H1 (cell line): ENCODE measurements at regions of chr1 and their contacts with region 1.

Region 1: DNA sequence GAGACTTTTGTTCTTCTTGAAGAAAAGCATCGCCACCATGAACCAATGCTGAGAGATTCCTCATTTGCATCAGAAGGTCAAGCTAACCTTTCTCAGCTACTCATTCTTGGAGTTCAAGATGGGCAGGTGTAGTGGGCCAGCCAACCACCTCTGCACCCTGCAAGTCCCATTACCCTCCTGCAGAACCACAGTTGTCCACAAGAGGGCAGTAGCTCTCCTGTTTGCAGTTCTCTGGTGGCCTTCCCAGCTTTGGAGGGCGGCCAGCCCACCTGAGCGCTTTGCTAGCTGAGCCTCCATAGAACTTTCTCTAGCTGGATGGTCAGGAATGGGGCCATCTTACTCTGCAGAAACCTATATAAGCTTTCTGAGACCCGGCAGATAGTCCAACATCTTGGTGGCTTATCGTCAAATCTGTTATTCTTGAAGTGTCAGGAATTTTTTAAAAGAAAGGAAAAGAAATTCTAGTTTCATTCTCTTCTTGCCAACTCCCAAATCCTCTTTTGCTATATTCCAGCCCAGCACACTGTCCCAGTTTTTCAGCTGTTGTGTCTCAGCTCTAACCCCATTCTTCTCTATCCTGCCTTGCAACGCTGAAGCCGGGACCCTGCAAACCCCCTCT is 11.0 kb upstream of the LMX1A start:
- DNase-seq: peak in 1 of 2 experiments; percentile 98
- H3K4me3 ChIP-seq: no peak overlapping the region
- H3K27ac ChIP-seq: no peak overlapping the region
- H3K4me1 ChIP-seq: peaks cover 0 to 4% (median 0%) of the 10 kb centered on the region in 4 experiments; a peak in 3 of 7 replicates
- H3K27me3 ChIP-seq: peaks cover 0 to 5% (median 0%) of the 10 kb centered on the region in 4 experiments; a peak in 1 of 7 replicates
- CTCF ChIP-seq: peak; percentile 90 to 99 (median 91)
- EP300 ChIP-seq: no peak
- POLR2A ChIP-seq: no peak
- RAD21 ChIP-seq: peak; percentile 64 to 76

Region 2: DNA sequence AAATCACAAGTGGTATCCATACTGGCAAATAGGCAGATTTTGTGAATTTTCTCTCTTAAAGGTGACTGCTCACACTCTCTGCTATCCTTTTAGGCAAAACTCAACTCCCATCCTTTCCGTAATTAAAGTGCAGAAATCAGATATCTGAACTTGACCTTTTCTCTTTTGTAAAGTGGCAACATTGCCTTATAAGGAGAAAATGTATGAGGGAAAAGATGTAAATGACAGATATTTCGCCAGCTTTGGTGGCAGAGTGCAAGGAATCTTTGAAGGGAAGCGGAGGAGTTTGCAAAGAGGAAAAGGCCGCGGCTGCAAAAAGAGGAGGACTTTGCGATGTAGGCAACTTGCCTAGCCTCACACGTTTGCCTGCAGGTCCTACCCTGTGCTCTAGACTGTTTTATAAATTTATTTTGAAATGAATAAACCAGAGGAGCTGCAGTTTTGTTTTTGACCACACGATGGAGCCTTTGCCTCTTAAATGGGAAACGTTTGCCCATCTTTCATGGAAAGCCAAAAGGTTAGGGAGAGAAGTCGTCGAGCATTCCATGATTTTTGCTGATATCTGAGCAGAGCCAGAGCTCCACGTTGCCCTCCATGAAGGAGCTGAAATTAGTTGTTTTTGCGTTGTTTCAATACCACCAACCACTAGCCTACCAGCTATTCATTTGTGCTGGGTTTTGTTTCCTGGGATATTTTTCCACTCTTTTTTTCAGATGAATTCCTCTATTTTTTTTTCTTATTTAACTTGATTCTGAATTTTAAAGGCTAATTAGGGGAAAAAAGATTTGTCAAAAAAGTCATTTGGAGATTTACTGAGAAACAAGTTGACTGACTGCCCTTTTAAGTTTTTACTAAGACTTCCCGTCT is 253.2 kb before region 1 on chr1:
- CTCF ChIA-PET with region 1: interaction called, 13 read pairs
- POLR2A ChIA-PET with region 1: no interaction called
- DNase-seq: peak; percentile 47 to 84
- H3K4me3 ChIP-seq: no peak overlapping the region
- H3K27ac ChIP-seq: no peak overlapping the region
- H3K4me1 ChIP-seq: peaks cover 0 to 7% (median 3%) of the 10 kb centered on the region in 4 experiments; a peak in 4 of 7 replicates
- H3K27me3 ChIP-seq: peaks cover 20 to 42% (median 29%) of the 10 kb centered on the region in 4 experiments
- CTCF ChIP-seq: peak in 2 of 3 experiments; percentile 72; a peak in 3 of 4 replicates
- EP300 ChIP-seq: no peak
- POLR2A ChIP-seq: no peak
- RAD21 ChIP-seq: peak; percentile 81 to 88

Region 3: DNA sequence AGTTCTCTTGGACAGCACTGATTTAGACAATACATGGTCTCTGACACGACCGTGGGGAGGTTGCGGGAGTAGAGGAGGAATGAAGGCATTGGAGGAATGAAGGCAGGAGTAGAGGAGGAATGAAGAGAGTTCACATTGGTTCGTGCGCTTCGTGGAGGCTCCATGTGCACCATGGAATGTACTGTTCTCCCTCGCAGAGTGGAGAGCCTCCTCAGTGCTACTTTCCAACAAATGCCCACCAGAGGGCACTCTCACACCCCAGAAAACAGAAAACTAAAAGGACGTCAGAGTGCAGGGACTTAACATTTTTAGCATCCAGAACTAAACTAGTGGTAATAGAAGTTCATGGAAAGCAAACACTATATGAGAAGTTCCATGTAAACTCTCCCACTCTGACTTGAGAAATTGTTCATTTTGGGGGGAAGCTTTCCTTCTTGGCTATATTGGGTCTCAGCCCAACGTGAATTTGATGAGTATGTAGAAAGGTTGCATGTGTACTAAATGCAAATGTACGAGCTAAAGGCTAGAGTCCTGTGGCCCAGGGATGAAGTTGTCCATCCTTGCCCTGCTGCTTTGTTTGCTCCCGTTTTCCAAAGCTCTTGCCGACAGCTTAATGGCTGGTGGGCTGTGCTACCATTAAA is 222.6 kb before region 1 on chr1:
- CTCF ChIA-PET with region 1: interaction called, 70 read pairs
- POLR2A ChIA-PET with region 1: no interaction called
- DNase-seq: peak; percentile 36 to 80
- H3K4me3 ChIP-seq: no peak overlapping the region
- H3K27ac ChIP-seq: no peak overlapping the region
- H3K4me1 ChIP-seq: no peaks in the 10 kb centered on the region
- H3K27me3 ChIP-seq: peaks cover 0 to 2% (median 1%) of the 10 kb centered on the region in 4 experiments; a peak in 3 of 7 replicates
- CTCF ChIP-seq: peak; percentile 51 to 84 (median 83)
- EP300 ChIP-seq: no peak
- POLR2A ChIP-seq: no peak
- RAD21 ChIP-seq: peak; percentile 81 to 89

Region 4: DNA sequence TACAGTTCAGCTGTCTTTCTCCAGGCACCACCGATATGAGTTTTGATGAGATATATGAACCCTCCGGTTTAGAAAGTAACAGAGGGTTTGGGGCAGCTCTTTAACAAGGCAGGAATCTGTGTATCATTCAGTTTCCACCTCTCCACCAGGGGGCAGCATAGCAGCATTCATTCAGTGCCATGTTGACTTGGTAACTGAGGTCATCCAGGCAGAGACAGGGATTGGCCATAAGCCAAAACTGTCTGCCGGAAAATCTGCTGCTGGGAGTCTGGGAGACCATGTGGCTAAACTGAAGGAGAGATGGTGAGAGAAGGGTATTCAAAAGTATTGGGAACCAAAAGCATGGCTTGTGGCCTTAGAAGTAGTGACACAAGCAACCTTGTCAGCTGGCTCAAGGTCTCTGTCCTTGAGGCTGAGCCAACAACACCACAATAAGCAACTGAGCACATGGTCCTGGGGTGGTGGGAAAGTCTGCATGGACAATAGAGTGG is 109.5 kb before region 1 on chr1:
- CTCF ChIA-PET with region 1: interaction called, 138 read pairs
- POLR2A ChIA-PET with region 1: no interaction called
- DNase-seq: peak; percentile 61 to 90
- H3K4me3 ChIP-seq: no peak overlapping the region
- H3K27ac ChIP-seq: no peak overlapping the region
- H3K4me1 ChIP-seq: peaks cover 0 to 3% (median 1%) of the 10 kb centered on the region in 4 experiments; a peak in 2 of 7 replicates
- H3K27me3 ChIP-seq: peaks cover 0 to 3% (median 1%) of the 10 kb centered on the region in 4 experiments; a peak in 4 of 7 replicates
- CTCF ChIP-seq: peak; percentile 47 to 91 (median 88)
- EP300 ChIP-seq: no peak
- POLR2A ChIP-seq: no peak
- RAD21 ChIP-seq: peak; percentile 92 to 94

Region 5: GRCh38 chr1:165313903-165314302 is 53.6 kb before region 1 on chr1:
- CTCF ChIA-PET with region 1: interaction called, 24 read pairs
- POLR2A ChIA-PET with region 1: interaction called, 3 read pairs
- DNase-seq: no peak
- H3K4me3 ChIP-seq: no peak overlapping the region
- H3K27ac ChIP-seq: no peak overlapping the region
- H3K4me1 ChIP-seq: peaks cover 0 to 3% (median 0%) of the 10 kb centered on the region in 4 experiments; a peak in 1 of 7 replicates
- H3K27me3 ChIP-seq: no peaks in the 10 kb centered on the region; a peak in 1 of 7 replicates
- CTCF ChIP-seq: no peak
- EP300 ChIP-seq: no peak
- POLR2A ChIP-seq: no peak
- RAD21 ChIP-seq: no peak

Region 6: GRCh38 chr1:165355977-165356811 is 11.3 kb before region 1 on chr1 and contains the start of gene LMX1A:
- CTCF ChIA-PET with region 1: interaction called, 54 read pairs
- POLR2A ChIA-PET with region 1: interaction called, 3 read pairs
- DNase-seq: peak in 1 of 2 experiments; percentile 71
- H3K4me3 ChIP-seq: peak within 1 kb of the TSS; percentile 55 to 68 (median 59)
- H3K27ac ChIP-seq: no peak within 1 kb of the TSS
- H3K4me1 ChIP-seq: peaks cover 6 to 29% (median 20%) of the 10 kb centered on the region in 4 experiments
- H3K27me3 ChIP-seq: peaks cover 67 to 90% (median 82%) of the 10 kb centered on the region in 4 experiments
- CTCF ChIP-seq: no peak
- EP300 ChIP-seq: no peak
- POLR2A ChIP-seq: no peak
- RAD21 ChIP-seq: no peak
- total RNA-seq, gene LMX1A: not detected in 2 replicates

Region 7: DNA sequence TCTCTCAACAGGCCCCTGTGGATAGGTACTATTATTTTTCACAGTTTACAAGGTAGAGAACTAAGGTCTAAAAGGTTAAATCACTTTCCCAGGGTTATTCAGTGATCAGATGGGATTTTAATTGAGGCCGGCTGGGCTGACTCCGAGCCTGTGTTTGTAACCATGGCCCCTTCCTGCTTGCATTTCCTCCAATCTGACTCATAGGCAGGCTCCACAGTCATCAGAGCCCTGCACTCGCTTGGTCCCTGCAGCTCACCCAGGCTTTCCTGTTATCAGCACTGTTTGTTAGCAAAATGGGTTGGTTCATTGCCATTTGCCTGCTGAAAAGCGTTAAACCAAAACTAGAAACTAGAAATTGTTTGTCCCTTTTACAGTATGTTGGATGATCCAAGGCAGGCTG is 30.5 kb after region 1 on chr1:
- CTCF ChIA-PET with region 1: interaction called, 38 read pairs
- POLR2A ChIA-PET with region 1: no interaction called
- DNase-seq: no peak
- H3K4me3 ChIP-seq: no peak overlapping the region
- H3K27ac ChIP-seq: no peak overlapping the region
- H3K4me1 ChIP-seq: no peaks in the 10 kb centered on the region; a peak in 1 of 7 replicates
- H3K27me3 ChIP-seq: no peaks in the 10 kb centered on the region
- CTCF ChIP-seq: no peak
- EP300 ChIP-seq: no peak
- POLR2A ChIP-seq: no peak
- RAD21 ChIP-seq: no peak